Activated naive CD4-positive, alpha-beta T cell treated with anti-CD3 and anti-CD28 coated beads, Interleukin-2, amount 10 ng/mL, durations not matched to agents 7 days and 5 days (primary cell): ENCODE measurements at regions of chr1 and their contacts with region 1.

Region 1: DNA sequence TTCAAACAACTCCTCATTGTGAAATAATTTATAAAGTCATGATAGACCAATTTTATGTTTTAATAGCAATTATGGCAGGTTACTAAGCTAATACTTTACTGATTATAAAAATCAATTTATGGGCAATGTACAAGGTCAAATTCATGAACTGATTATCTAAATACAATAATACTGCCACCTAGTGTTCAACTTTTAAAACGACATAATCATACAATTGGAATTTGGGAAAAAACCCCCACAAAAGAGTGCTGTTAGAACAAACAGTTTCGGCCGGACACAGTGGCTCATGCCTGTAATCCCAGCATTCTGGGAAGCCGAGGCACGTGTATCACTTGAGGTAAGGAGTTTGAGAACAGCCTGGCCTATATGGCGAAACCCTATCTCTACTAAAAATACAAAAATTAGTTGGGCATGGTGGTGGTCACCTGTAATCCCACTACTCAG is 14.0 kb downstream of the GTF2B start:
- DNase-seq: no peak
- H3K4me3 Mint-ChIP-seq: no peak overlapping the region
- H3K27ac Mint-ChIP-seq: no peak overlapping the region
- H3K4me1 Mint-ChIP-seq: peaks cover 17% of the 10 kb centered on the region
- H3K27me3 Mint-ChIP-seq: no peaks in the 10 kb centered on the region

Region 2: DNA sequence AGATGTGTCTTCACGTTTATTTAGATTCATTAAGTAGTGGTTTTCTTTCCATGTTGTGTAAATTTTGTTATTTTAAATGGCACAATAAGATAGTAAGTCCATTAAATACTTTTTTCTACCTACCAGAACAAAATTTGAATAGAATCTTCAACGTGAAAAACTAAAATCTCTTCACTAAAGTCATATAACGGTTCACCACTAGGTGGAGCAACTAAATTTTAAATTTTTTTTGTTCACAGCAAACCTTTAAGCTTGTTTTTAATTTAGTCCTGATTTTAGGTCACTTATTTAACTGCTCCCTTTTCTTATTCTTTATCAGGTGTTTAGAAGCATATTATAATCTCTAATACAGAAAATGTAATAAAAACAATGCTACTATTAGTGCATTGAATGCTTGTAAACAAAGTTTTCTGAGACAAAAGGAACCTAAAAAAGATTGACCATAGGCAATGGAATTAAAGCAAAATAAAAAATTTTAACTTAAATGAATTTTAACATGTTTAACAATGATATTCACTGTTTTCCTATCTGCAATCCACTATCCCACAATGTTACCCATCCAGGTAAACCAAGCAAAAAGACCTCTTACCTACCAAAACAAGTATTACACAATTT is 221.6 kb before region 1 on chr1:
- CTCF ChIA-PET with region 1: interaction called, 62 read pairs
- DNase-seq: no peak
- H3K4me3 Mint-ChIP-seq: no peak overlapping the region
- H3K27ac Mint-ChIP-seq: no peak overlapping the region
- H3K4me1 Mint-ChIP-seq: peaks cover 16% of the 10 kb centered on the region
- H3K27me3 Mint-ChIP-seq: peaks cover 6% of the 10 kb centered on the region

Region 3: GRCh38 chr1:88801575-88802208 is 75.7 kb before region 1 on chr1:
- CTCF ChIA-PET with region 1: interaction called, 11 read pairs
- DNase-seq: no peak
- H3K4me3 Mint-ChIP-seq: no peak overlapping the region
- H3K27ac Mint-ChIP-seq: peak overlapping the region; percentile 82
- H3K4me1 Mint-ChIP-seq: peaks cover 21% of the 10 kb centered on the region
- H3K27me3 Mint-ChIP-seq: no peaks in the 10 kb centered on the region

Region 4: GRCh38 chr1:88891318-88891950 is 14.0 kb after region 1 on chr1 and contains the start of gene GTF2B:
- CTCF ChIA-PET with region 1: interaction called, 49 read pairs
- DNase-seq: peak; percentile 96
- H3K4me3 Mint-ChIP-seq: peak within 1 kb of the TSS; percentile 95
- H3K27ac Mint-ChIP-seq: peak within 1 kb of the TSS; percentile 98
- H3K4me1 Mint-ChIP-seq: peaks cover 41% of the 10 kb centered on the region
- H3K27me3 Mint-ChIP-seq: no peaks in the 10 kb centered on the region